Caco-2 (cell line): ENCODE measurements at regions of chr2 and their contacts with region 1.

Region 1: DNA sequence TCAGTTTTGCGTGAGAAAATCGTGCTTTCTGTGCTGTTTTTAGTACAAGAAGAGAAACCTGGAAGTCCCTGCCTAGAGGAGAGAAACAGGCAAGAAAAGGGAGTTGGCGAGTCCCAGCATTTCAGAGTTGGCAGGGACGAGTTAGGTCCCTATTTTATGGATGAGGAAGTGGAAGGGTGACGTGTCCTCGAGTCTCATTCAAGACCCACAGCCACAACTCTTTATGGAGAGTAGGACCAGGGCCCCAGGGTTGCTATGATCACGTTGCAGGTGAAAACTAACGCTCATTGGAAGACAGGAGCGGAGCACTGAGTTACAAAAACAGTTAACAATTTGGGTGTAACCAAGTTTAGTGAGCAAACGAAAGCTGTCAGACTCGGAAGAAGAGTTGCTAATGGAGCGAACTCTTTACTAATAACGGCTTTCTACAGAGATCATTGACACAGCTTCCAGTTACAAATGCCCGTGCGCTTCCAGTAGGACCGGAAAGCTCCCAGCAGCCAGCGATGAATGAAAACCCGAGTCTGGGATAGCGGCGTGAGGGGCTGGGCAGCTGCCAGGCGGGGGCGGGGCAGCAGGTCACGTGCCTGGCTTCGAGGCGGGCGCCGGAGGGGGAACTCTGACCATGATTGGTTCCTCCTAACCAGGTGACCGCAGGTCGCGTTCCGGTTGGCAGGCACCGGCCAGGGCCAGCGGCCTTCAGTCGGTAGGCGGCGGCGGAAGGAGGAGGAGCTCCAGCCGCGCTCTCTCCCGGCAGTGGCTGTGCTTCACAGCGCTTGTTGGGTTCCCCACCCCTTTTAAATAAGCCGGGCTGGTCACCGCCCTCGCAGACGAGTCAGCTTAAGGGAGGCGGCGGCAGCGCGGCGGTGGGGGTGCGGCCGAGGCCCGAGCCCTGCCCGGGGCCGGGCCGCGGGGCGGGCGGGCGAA is at the start of gene CCNYL1:
- DNase-seq: peak; percentile 100
- H3K4me3 ChIP-seq: peak within 1 kb of the TSS; percentile 83
- H3K4me3 Mint-ChIP-seq: peak within 1 kb of the TSS; percentile 96
- H3K27ac Mint-ChIP-seq: peak within 1 kb of the TSS; percentile 88
- H3K4me1 ChIP-seq: peaks cover 14% of the 10 kb centered on the region; the same call in 1 of the 2 replicates
- H3K4me1 Mint-ChIP-seq: peaks cover 6% of the 10 kb centered on the region
- H3K27me3 ChIP-seq: no peaks in the 10 kb centered on the region
- H3K27me3 Mint-ChIP-seq: no peaks in the 10 kb centered on the region
- CTCF ChIP-seq: peak in 1 of 2 experiments; percentile 20
- total RNA-seq, gene CCNYL1: 39.4 and 40.7 TPM in 2 replicates

Region 2: DNA sequence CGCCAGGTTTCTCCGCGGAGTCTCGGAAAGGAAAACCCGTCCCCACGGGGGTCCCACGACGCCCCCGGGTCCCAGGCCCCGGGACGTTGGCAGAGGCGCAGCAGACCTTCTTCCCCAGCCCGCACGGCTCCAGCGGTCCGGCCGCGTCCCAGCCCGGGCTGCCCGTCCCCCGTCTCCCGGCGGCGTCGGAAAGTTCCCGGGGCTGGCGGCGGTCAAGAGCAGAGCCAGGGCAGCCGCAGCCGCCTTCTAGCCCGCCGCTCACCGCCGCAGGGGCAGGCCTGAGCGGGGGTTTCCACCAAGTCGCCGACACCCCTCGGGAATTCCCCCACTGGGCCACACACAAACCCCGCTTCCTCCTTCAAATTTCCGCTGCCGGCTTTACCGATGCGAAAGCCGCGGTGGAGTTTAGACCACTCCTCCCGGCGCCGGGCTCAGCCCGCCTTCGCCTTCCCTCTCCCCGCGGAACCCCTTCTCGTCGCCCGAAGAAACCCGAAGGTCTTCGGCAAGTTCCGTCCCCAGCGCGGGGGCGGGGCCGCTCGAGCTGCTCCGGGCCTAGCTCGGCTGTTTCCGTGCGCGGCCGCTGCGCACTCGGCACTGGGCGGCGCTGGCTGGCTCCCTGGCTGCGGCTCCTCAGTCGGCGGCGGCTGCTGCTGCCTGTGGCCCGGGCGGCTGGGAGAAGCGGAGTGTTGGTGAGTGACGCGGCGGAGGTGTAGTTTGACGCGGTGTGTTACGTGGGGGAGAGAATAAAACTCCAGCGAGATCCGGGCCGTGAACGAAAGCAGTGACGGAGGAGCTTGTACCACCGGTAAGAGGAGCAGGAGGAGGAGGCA is 181.5 kb before region 1 on chr2 and contains the start of gene CREB1:
- CTCF ChIA-PET with region 1: no interaction called
- POLR2A ChIA-PET with region 1: interaction called, 30 read pairs
- intact Hi-C with region 1: loop called (anchors 2 kb)
- DNase-seq: peak; percentile 98 to 100
- H3K4me3 ChIP-seq: peak within 1 kb of the TSS; percentile 89
- H3K4me3 Mint-ChIP-seq: peak within 1 kb of the TSS; percentile 78
- H3K27ac Mint-ChIP-seq: peak within 1 kb of the TSS; percentile 97
- H3K4me1 ChIP-seq: peaks cover 35% of the 10 kb centered on the region
- H3K4me1 Mint-ChIP-seq: peaks cover 21% of the 10 kb centered on the region
- H3K27me3 ChIP-seq: no peaks in the 10 kb centered on the region
- H3K27me3 Mint-ChIP-seq: no peaks in the 10 kb centered on the region
- CTCF ChIP-seq: no peak
- total RNA-seq, gene CREB1: 49.7 and 59.0 TPM in 2 replicates

Region 3: DNA sequence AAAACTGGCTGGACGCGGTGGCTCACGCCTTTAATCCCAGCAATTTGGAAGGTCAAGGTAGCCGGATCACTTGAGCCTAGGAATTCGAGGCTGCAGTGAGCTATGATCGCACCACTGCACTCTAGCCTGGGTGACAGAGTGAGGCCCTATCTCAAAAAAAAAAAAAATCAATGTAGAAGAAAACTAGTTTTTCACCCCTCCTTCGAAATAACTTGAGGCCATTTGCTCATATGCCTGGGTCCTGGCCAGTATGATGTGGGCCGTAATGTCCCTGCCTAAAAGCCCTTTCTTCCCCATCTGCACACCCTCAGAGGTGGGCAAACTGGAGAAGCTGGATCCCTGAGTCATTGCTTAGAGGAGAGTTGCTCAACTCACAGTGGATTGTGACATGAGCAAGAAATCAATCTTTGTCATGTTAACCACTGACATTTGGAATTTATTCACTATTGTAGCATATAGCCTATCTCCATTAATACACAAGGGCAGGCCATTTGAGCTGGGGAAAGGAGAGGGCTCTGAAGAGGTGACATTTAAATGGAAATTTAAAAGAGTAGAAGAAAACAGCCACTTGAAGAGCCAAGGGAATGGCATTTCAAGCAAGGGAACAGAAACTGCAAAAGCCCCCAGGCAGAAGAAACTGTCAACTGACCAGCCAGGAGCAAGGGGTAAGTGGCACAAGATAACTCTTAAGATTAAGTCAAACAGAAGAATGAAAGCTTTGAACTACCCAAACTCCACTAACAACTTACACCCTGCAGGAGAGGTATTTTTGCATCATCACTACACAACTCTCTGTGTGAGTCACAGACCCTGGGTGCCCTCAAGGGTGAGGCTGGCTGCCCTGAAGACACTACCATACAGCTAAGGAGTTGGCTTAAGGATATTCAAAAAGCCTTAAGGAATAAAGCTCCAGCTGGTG is 78.2 kb before region 1 on chr2:
- CTCF ChIA-PET with region 1: no interaction called
- POLR2A ChIA-PET with region 1: interaction called, 12 read pairs
- intact Hi-C with region 1: loop called (anchors 2 kb)
- DNase-seq: peak; percentile 76 to 77
- H3K4me3 ChIP-seq: no peak overlapping the region
- H3K4me3 Mint-ChIP-seq: peak overlapping the region; percentile 15
- H3K27ac Mint-ChIP-seq: peak overlapping the region; percentile 80
- H3K4me1 ChIP-seq: peaks cover 30% of the 10 kb centered on the region
- H3K4me1 Mint-ChIP-seq: peaks cover 23% of the 10 kb centered on the region
- H3K27me3 ChIP-seq: no peaks in the 10 kb centered on the region
- H3K27me3 Mint-ChIP-seq: no peaks in the 10 kb centered on the region
- CTCF ChIP-seq: no peak

Region 4: GRCh38 chr2:207676827-207677354 is 34.2 kb before region 1 on chr2:
- CTCF ChIA-PET with region 1: no interaction called
- POLR2A ChIA-PET with region 1: interaction called, 3 read pairs
- intact Hi-C with region 1: loop called (anchors 1 kb)
- DNase-seq: peak; percentile 40 to 55
- H3K4me3 ChIP-seq: no peak overlapping the region
- H3K4me3 Mint-ChIP-seq: peak overlapping the region; percentile 65
- H3K27ac Mint-ChIP-seq: peak overlapping the region; percentile 96
- H3K4me1 ChIP-seq: peaks cover 34% of the 10 kb centered on the region
- H3K4me1 Mint-ChIP-seq: peaks cover 35% of the 10 kb centered on the region
- H3K27me3 ChIP-seq: no peaks in the 10 kb centered on the region
- H3K27me3 Mint-ChIP-seq: no peaks in the 10 kb centered on the region
- CTCF ChIP-seq: no peak

Region 5: GRCh38 chr2:207683879-207684627 is 27.0 kb before region 1 on chr2:
- CTCF ChIA-PET with region 1: interaction called, 4 read pairs
- POLR2A ChIA-PET with region 1: interaction called, 26 read pairs
- intact Hi-C with region 1: loop called (anchors 1 kb)
- DNase-seq: peak; percentile 54 to 74
- H3K4me3 ChIP-seq: no peak overlapping the region
- H3K4me3 Mint-ChIP-seq: peak overlapping the region; percentile 16
- H3K27ac Mint-ChIP-seq: peak overlapping the region; percentile 83
- H3K4me1 ChIP-seq: peaks cover 23% of the 10 kb centered on the region
- H3K4me1 Mint-ChIP-seq: peaks cover 30% of the 10 kb centered on the region
- H3K27me3 ChIP-seq: no peaks in the 10 kb centered on the region
- H3K27me3 Mint-ChIP-seq: no peaks in the 10 kb centered on the region
- CTCF ChIP-seq: no peak